ENCODE measurements at regions of chr7 and their contacts with region 1.

Region 1: DNA sequence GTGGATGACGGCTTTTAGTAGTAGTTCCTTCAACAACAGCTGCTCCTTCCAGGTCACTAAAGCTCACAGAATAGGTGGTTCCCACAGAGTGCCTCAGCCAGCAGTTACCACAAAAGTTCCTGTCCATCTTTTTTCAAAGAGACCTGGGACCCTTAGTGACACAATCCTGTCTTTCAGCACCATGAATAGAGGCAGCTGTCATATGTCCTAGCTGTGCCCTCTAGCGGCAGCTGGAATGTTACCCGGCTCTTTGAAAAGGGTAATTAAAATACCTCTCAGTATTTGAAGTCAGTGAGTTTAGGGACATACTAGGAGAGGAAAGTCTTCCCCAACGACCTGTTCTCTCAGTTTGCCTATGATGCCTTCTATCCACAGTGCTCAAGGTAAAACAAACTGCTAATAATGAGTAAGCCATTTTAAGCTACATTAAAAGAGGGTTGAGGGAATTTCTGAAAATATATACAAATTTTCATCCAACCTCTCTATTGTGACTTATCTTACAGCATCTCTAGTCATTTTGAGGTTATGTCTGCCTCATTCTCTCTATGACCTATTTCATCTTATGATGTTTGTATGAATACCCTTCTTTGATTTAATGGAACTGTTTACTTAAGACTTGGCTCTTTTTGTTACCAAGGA is 290.8 kb downstream of the NXPH1 start:
- DNase-seq: no peak
- ATAC-seq: no peak

Region 2: GRCh38 chr7:8668627-8669500 is 55.3 kb before region 1 on chr7:
- intact Hi-C with region 1: no loop called
- DNase-seq: no peak
- ATAC-seq: peak; percentile 39

Region 3: GRCh38 chr7:9026121-9026520 is 301.9 kb after region 1 on chr7:
- intact Hi-C with region 1: no loop called
- DNase-seq: no peak
- ATAC-seq: no peak

Region 4: DNA sequence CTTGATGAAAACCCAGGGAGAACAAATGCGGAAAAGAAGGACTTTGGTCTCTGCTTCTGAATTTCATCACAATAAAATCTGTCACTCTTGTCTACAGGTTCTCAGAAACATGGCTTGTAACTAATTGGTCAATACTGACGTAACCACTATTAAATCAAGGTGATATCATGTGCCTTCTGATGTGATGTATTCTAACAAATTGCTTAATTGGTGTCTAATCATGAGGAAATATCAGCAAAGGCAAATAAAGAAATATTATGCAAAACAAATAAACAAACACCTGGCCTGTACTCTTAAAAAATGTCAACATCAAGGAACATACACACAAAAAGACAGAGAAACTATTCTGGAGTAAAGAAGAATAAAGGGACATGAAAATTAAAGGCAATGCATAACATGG is 874.2 kb after region 1 on chr7:
- intact Hi-C with region 1: loop called (anchors 5 kb)
- DNase-seq: no peak
- ATAC-seq: no peak